Breast epithelium (tissue), 4 donors: ENCODE measurements at regions of chr1 and their contacts with region 1.

Region 1: DNA sequence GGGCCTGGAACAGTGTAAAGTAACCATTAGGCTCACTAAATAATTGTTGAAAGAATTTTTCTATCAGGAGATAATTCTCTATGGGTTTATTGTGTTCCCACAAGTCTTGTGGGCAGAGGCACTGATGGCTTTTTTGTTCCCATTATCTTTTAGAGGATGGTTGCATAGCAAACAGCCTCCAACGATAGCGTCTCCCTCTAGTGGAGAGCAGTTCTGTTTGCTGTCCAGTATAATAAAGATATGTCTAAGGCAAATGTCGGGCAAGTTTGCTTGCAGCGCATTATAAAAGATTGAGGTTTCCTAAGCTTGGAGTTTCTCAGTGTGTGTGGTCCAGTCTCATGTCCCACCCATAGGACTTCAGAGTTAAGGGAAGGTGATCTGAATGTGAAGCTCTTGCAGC is 1.3 kb upstream of the SLC6A17 start:
- DNase-seq: no peak
- H3K4me3 ChIP-seq: no peak overlapping the region
- H3K27ac ChIP-seq: no peak overlapping the region
- H3K4me1 ChIP-seq: peaks cover 0 to 11% of the 10 kb centered on the region in 2 donors
- H3K27me3 ChIP-seq: peaks cover 0 to 61% of the 10 kb centered on the region in 2 donors
- CTCF ChIP-seq: no peak
- POLR2A ChIP-seq: no peak

Region 2: GRCh38 chr1:109158433-109158832 is 990.5 kb before region 1 on chr1:
- intact Hi-C with region 1: loop called (anchors 5 kb)
- DNase-seq: no peak
- H3K4me3 ChIP-seq: no peak overlapping the region
- H3K27ac ChIP-seq: peak overlapping the region; percentile 21 to 29
- H3K4me1 ChIP-seq: peaks cover 0 to 19% of the 10 kb centered on the region in 2 donors
- H3K27me3 ChIP-seq: no peaks in the 10 kb centered on the region
- CTCF ChIP-seq: no peak
- POLR2A ChIP-seq: no peak